Activated naive CD4-positive, alpha-beta T cell treated with anti-CD3 and anti-CD28 coated beads for 36 hours (primary cell): ENCODE measurements at regions of chrX and their contacts with region 1.

Region 1: DNA sequence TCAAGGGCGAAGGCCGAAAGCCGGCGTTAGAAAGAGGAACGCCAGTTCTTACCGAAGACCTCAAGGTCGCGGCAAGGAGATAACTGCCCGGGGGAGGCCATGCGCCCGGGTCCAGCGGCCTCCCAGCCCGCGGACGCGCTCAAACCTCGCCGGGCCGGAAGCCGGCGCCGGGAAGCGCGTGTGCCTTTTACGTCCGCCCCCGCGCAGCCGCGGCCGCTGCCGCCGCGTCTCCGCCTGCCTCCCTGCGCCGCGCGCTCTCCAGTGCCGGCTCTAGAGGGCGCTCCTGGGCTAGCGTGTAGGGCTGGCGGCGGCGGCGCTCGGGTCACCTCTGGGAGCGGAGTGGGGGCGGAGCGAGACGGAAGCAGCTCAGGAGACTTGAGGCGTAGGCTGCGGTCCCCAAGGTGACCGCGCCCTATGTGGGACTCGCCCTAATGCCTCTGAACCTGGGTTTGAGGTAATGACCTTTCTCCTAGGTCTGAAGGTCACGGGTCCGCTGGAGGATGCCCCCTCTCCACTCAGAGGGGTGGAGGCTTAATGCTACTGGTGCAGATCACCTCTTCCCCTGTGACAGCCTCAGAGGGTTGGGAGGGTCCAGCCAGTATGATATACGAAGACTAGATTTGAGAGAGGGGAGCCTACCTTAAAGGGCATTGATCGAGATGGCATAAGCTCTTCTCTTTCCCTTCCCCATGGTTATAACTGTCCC is 839 bp downstream of the SLC25A5 start:
- DNase-seq: peak; percentile 92
- H3K4me3 Mint-ChIP-seq: peak overlapping the region; percentile 83
- H3K27ac Mint-ChIP-seq: peak overlapping the region; percentile 92
- H3K4me1 Mint-ChIP-seq: peaks cover 15% of the 10 kb centered on the region
- H3K27me3 Mint-ChIP-seq: no peaks in the 10 kb centered on the region

Region 2: GRCh38 chrX:119482481-119483480 is 13.7 kb after region 1 on chrX:
- CTCF ChIA-PET with region 1: interaction called, 25 read pairs
- intact Hi-C with region 1: loop called (anchors 1 kb)
- DNase-seq: peak; percentile 68
- H3K4me3 Mint-ChIP-seq: peak overlapping the region; percentile 70
- H3K27ac Mint-ChIP-seq: no peak overlapping the region
- H3K4me1 Mint-ChIP-seq: peaks cover 11% of the 10 kb centered on the region
- H3K27me3 Mint-ChIP-seq: no peaks in the 10 kb centered on the region

Region 3: GRCh38 chrX:119565107-119565663 is 96.1 kb after region 1 on chrX and contains the start of gene STEEP1:
- CTCF ChIA-PET with region 1: no interaction called
- intact Hi-C with region 1: loop called (anchors 1 kb)
- DNase-seq: peak; percentile 95
- H3K4me3 Mint-ChIP-seq: peak within 1 kb of the TSS; percentile 95
- H3K27ac Mint-ChIP-seq: peak within 1 kb of the TSS; percentile 89
- H3K4me1 Mint-ChIP-seq: peaks cover 20% of the 10 kb centered on the region
- H3K27me3 Mint-ChIP-seq: no peaks in the 10 kb centered on the region
- total RNA-seq, gene STEEP1: 19.6 to 20.7 TPM

Region 4: DNA sequence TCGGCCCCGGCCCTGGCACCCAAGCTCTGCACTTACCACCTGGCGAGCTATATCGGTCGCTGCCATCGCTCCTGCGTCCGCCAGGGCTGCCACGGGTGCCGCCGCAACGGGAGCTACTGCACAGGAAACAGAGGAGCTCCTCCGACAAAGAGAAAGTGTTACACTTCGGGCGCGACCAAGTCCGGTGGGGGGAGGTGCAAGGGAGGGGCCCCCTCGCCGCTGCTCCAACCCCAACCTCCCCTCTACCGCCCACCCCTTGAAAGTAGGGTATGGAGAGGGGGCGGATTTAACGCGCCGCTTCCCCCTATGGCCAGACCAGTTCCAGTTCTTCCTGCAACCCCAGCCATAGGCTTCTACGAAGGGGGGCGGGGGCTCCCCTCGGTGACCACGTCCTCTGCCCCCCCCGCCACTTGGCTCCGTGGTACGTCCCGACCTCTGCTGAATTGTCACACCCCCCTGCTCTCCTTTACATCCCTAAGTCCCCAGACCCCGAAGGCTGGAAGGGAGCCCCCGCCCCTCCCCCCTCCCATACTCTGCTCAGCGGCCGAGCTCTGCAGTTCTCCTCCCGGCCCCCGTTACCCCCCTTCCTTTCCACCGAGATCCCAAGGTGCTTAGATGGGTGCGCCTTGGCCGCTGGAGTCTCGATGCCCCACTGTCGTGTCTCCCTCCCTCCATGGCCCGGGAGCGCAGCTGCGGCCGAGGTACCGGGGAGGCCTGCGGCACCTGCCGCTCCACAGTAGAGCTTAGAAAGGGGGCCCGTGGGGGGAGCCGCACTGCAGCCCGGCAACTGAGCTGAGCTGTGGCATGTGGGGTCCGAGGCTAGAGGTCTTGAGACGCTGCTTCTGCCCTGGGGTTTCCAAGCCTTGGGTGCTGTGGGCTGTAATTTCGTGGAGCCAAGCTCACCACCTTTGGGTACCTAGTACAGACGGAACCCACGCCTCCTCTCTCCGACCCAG is 224.2 kb after region 1 on chrX and contains the start of gene SEPTIN6:
- CTCF ChIA-PET with region 1: no interaction called
- intact Hi-C with region 1: loop called (anchors 5 kb)
- DNase-seq: peak; percentile 86
- H3K4me3 Mint-ChIP-seq: peak within 1 kb of the TSS; percentile 95
- H3K27ac Mint-ChIP-seq: peak within 1 kb of the TSS; percentile 100
- H3K4me1 Mint-ChIP-seq: peaks cover 10% of the 10 kb centered on the region
- H3K27me3 Mint-ChIP-seq: no peaks in the 10 kb centered on the region
- total RNA-seq, gene SEPTIN6: 137 to 143 TPM

Region 5: GRCh38 chrX:119852382-119853353 is 383.6 kb after region 1 on chrX and contains the start of gene UPF3B:
- CTCF ChIA-PET with region 1: no interaction called
- intact Hi-C with region 1: loop called (anchors 1 kb)
- DNase-seq: peak; percentile 97
- H3K4me3 Mint-ChIP-seq: peak within 1 kb of the TSS; percentile 98
- H3K27ac Mint-ChIP-seq: peak within 1 kb of the TSS; percentile 97
- H3K4me1 Mint-ChIP-seq: peaks cover 8% of the 10 kb centered on the region
- H3K27me3 Mint-ChIP-seq: no peaks in the 10 kb centered on the region
- total RNA-seq, gene UPF3B: 21.5 to 22.2 TPM